Breast epithelium (tissue), 4 donors: ENCODE measurements at regions of chr9 and their contacts with region 1.

Region 1: GRCh38 chr9:93159601-93160471 is 24.1 kb upstream of the WNK2 start:
- DNase-seq: peak; percentile 69 to 81
- H3K4me3 ChIP-seq: no peak overlapping the region
- H3K27ac ChIP-seq: no peak overlapping the region
- H3K4me1 ChIP-seq: no peaks in the 10 kb centered on the region
- H3K27me3 ChIP-seq: no peaks in the 10 kb centered on the region
- CTCF ChIP-seq: peak; percentile 75 to 98 (median 96)
- POLR2A ChIP-seq: no peak

Region 2: GRCh38 chr9:92058723-92059444 is 1101.0 kb before region 1 on chr9:
- intact Hi-C with region 1: no loop called
- DNase-seq: no peak
- H3K4me3 ChIP-seq: no peak overlapping the region
- H3K27ac ChIP-seq: no peak overlapping the region
- H3K4me1 ChIP-seq: no peaks in the 10 kb centered on the region
- H3K27me3 ChIP-seq: no peaks in the 10 kb centered on the region
- CTCF ChIP-seq: no peak
- POLR2A ChIP-seq: no peak

Region 3: DNA sequence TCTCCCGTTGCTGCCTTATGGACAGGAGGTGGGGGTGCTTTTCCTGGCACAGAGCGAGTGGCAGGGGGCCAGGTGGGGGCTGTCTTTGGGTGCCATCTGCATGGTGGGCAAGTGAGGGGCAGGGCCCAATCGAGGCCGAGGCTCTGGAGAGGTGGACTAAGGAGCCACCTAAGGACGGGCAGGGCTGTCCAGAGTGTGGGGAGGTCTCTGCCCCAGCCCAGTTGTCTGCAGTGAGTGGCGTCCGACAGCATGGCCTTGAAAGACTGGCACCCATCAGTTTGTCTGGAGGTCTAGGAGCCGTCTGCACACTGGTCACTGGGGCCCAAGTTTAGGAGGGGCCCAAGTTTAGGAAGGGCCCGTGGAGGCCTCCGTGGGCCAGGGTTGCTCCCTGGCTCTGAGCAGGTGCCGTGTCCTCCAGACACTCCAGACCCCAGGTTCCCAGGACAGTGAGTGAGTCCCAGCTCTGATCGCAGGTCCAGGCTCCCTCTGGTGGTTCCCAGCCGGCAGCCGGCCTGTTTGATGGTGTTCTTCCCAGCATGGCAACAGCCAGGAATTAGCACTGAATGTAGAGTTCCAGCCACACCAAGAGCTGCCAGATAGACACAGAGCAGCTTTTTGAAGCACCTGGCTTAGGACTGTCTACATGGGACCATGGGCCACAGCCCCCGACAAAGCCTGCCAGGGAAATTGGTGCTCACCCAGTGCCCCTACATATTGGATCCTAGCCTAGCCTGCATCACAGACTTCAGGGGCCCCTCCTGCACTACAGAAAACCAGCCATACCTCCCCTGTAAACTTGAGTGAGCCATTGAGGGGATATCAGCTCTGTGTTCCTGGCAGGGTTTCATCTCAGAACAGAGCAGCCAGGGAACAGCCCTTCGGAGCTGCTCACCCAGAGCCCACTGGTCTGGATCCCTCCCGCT is 145.0 kb after region 1 on chr9:
- intact Hi-C with region 1: loop called (anchors 5 kb)
- DNase-seq: peak; percentile 65 to 70
- H3K4me3 ChIP-seq: no peak overlapping the region
- H3K27ac ChIP-seq: no peak overlapping the region
- H3K4me1 ChIP-seq: no peaks in the 10 kb centered on the region
- H3K27me3 ChIP-seq: no peaks in the 10 kb centered on the region
- CTCF ChIP-seq: peak in 2 of 3 donors; percentile 64 to 76
- POLR2A ChIP-seq: no peak